ENCODE measurements at regions of chr19 and their contacts with region 1.

Region 1: DNA sequence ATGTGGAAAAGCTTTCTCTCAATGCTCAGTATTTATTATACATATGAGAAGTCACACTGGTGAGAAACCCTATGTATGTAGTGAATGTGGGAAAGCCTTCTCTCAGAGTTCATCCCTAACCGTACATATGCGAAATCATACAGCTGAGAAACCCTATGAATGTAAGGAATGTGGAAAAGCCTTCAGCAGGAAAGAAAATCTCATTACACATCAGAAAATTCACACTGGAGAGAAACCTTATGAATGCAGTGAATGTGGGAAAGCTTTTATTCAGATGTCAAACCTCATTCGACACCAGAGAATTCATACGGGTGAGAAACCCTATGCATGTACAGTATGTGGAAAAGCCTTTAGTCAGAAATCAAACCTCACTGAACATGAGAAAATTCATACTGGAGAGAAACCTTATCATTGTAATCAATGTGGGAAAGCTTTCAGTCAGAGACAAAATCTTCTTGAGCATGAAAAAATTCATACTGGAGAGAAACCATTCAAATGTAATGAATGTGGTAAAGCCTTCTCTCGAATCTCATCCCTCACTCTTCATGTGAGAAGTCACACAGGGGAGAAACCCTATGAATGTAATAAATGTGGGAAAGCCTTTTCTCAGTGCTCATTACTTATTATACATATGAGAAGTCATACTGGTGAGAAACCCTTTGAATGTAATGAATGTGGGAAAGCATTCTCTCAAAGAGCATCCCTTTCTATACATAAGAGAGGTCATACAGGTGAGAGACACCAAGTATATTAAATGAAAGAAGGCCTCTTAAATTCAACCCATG is 34.4 kb downstream of the ZNF568 start:
- DNase-seq: no peak
- H3K27ac ChIP-seq: no peak overlapping the region
- CTCF ChIP-seq: no peak

Region 2: GRCh38 chr19:36963280-36963679 is 12.8 kb after region 1 on chr19:
- CTCF ChIA-PET with region 1: no interaction called
- POLR2A ChIA-PET with region 1: no interaction called
- DNase-seq: no peak
- H3K27ac ChIP-seq: no peak overlapping the region
- CTCF ChIP-seq: no peak

Region 3: DNA sequence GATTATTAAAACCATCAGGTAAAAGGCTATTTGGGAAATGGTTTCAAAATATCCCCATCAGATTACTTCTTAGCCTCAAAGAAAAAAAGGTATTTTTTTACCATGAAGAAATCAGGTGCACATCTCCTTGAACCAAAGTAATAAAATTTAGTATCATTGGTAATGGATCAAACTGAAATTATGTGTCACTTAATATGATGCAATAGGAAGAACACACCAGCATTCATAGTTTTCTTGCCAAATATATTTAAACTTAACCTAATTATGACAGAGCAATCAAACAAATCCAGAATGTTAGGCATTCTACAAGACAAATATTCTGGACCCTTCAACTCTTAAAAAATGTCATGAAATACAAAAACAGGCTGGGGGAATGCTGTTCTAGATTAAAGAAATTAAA is 123.6 kb after region 1 on chr19:
- CTCF ChIA-PET with region 1: interaction called, 10 read pairs
- POLR2A ChIA-PET with region 1: no interaction called
- DNase-seq: no peak
- H3K27ac ChIP-seq: no peak overlapping the region
- CTCF ChIP-seq: no peak